Calu3 (cell line): ENCODE measurements at regions of chr2 and their contacts with region 1.

Region 1: GRCh38 chr2:203014456-203015199 is at the start of gene NBEAL1:
- DNase-seq: peak; percentile 99
- H3K4me3 Mint-ChIP-seq: peak within 1 kb of the TSS; percentile 95
- H3K27ac Mint-ChIP-seq: peak within 1 kb of the TSS; percentile 79
- H3K4me1 Mint-ChIP-seq: peaks cover 24% of the 10 kb centered on the region
- H3K27me3 Mint-ChIP-seq: no peaks in the 10 kb centered on the region
- CTCF ChIP-seq: no peak
- total RNA-seq, gene NBEAL1: 31.4 and 37.6 TPM in 2 replicates

Region 2: GRCh38 chr2:202634556-202635427 is 379.8 kb before region 1 on chr2 and contains the start of gene FAM117B:
- CTCF ChIA-PET with region 1: no interaction called
- intact Hi-C with region 1: loop called (anchors 10 kb)
- DNase-seq: peak; percentile 98
- H3K4me3 Mint-ChIP-seq: peak within 1 kb of the TSS; percentile 92
- H3K27ac Mint-ChIP-seq: peak within 1 kb of the TSS; percentile 84
- H3K4me1 Mint-ChIP-seq: peaks cover 17% of the 10 kb centered on the region
- H3K27me3 Mint-ChIP-seq: no peaks in the 10 kb centered on the region
- CTCF ChIP-seq: no peak
- total RNA-seq, gene FAM117B: 6.7 and 7.5 TPM in 2 replicates

Region 3: GRCh38 chr2:202718614-202719013 is 296.0 kb before region 1 on chr2:
- CTCF ChIA-PET with region 1: no interaction called
- intact Hi-C with region 1: no loop called
- DNase-seq: no peak
- H3K4me3 Mint-ChIP-seq: no peak overlapping the region
- H3K27ac Mint-ChIP-seq: no peak overlapping the region
- H3K4me1 Mint-ChIP-seq: peaks cover 12% of the 10 kb centered on the region
- H3K27me3 Mint-ChIP-seq: no peaks in the 10 kb centered on the region
- CTCF ChIP-seq: no peak

Region 4: GRCh38 chr2:202911512-202912341 is 102.9 kb before region 1 on chr2 and contains the starts of genes CARF and WDR12:
- CTCF ChIA-PET with region 1: interaction called, 7 read pairs
- intact Hi-C with region 1: loop called (anchors 2 kb)
- DNase-seq: peak; percentile 92
- H3K4me3 Mint-ChIP-seq: peak within 1 kb of the TSS; percentile 99
- H3K27ac Mint-ChIP-seq: peak within 1 kb of the TSS; percentile 94
- H3K4me1 Mint-ChIP-seq: peaks cover 20% of the 10 kb centered on the region
- H3K27me3 Mint-ChIP-seq: no peaks in the 10 kb centered on the region
- CTCF ChIP-seq: no peak
- total RNA-seq, gene CARF: 4.6 and 5.8 TPM in 2 replicates
- total RNA-seq, gene WDR12: 101 and 105 TPM in 2 replicates